SK-N-SH (cell line): ENCODE measurements at regions of chr16 and their contacts with region 1.

Region 1: GRCh38 chr16:55465077-55465896 is 13.7 kb upstream of the MMP2 start:
- DNase-seq: peak; percentile 81
- H3K4me3 ChIP-seq: peak overlapping the region in 1 of 2 experiments; percentile 56; a peak in 1 of 4 replicates
- H3K27ac ChIP-seq: no peak overlapping the region
- H3K4me1 ChIP-seq: peaks cover 0 to 2% of the 10 kb centered on the region in 2 experiments; a peak in 2 of 4 replicates
- H3K27me3 ChIP-seq: no peaks in the 10 kb centered on the region
- CTCF ChIP-seq: peak; percentile 100
- EP300 ChIP-seq: no peak
- RAD21 ChIP-seq: peak; percentile 100

Region 2: DNA sequence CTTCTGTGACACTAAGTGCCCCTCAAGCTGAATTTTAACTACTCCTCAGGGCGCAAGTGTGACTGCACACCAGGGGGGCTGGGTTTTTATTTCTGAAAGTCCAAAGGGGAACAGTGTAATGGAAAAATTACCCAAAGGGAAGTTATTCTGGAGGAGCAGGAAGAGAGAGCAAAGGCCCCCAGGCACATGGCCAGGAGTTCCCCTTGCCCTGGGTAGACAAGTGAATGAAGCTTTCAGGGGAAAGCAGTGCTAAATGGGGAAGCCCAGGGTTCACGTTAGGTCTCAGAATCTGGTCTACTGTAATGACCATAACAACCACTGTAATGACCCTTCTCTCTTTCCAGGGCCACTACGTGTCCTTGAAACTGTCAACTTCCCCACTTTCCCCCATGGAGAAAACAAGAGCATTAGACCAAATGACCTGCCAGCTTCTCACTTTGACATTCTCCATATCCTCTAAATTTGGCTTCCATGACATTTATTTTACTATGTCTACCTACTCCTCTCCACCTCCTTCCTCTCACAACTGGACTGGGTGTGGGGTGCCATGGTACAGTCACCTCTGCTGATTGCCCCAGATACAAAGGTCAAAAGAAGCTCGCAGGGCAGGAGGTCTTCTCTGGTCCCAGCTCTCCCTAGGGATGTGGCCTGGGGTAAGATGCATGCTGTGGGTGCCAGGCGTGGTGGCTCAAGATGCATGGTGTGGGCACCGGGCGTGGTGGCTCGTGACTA is 20.4 kb before region 1 on chr16:
- CTCF ChIA-PET with region 1: interaction called, 32 read pairs
- POLR2A ChIA-PET with region 1: no interaction called
- DNase-seq: no peak
- H3K4me3 ChIP-seq: no peak overlapping the region
- H3K27ac ChIP-seq: no peak overlapping the region
- H3K4me1 ChIP-seq: peaks cover 0 to 6% of the 10 kb centered on the region in 2 experiments; a peak in 1 of 4 replicates
- H3K27me3 ChIP-seq: no peaks in the 10 kb centered on the region
- CTCF ChIP-seq: no peak
- EP300 ChIP-seq: no peak
- RAD21 ChIP-seq: no peak

Region 3: GRCh38 chr16:55494994-55495421 is 29.7 kb after region 1 on chr16:
- CTCF ChIA-PET with region 1: interaction called, 25 read pairs
- POLR2A ChIA-PET with region 1: no interaction called
- DNase-seq: peak; percentile 77
- H3K4me3 ChIP-seq: no peak overlapping the region
- H3K27ac ChIP-seq: peak overlapping the region; percentile 84 to 94
- H3K4me1 ChIP-seq: peaks cover 37 to 48% of the 10 kb centered on the region in 2 experiments
- H3K27me3 ChIP-seq: no peaks in the 10 kb centered on the region
- CTCF ChIP-seq: peak; percentile 56
- EP300 ChIP-seq: peak in 1 of 2 experiments; percentile 27; a peak in 1 of 4 replicates
- RAD21 ChIP-seq: peak; percentile 88

Region 4: DNA sequence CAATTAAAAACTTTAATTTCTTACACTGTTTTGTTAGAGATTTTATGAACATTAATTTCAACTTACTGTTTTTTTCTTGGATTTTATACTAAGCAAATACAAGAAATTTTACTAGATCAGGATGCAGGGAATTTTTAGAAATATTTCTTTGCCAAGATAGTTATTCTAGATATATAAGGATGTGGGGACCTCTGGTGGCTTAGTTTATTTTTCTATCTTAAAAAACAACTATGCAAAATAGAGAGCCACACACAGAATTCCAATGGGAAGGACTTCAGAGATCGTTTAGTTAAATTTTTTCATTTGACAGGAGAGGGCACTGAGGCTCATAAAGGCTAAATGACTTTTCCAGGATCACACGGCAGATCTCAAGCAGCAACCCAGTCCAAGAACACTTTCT is 78.2 kb after region 1 on chr16:
- CTCF ChIA-PET with region 1: interaction called, 130 read pairs
- POLR2A ChIA-PET with region 1: no interaction called
- DNase-seq: peak; percentile 16
- H3K4me3 ChIP-seq: no peak overlapping the region
- H3K27ac ChIP-seq: peak overlapping the region; percentile 55 to 65; a peak in 2 of 4 replicates
- H3K4me1 ChIP-seq: peaks cover 9 to 15% of the 10 kb centered on the region in 2 experiments; a peak in 3 of 4 replicates
- H3K27me3 ChIP-seq: no peaks in the 10 kb centered on the region
- CTCF ChIP-seq: peak; percentile 65
- EP300 ChIP-seq: no peak
- RAD21 ChIP-seq: peak; percentile 74

Region 5: GRCh38 chr16:55661941-55662643 is 196.8 kb after region 1 on chr16:
- CTCF ChIA-PET with region 1: interaction called, 15 read pairs
- POLR2A ChIA-PET with region 1: no interaction called
- DNase-seq: peak; percentile 76
- H3K4me3 ChIP-seq: peak overlapping the region in 1 of 2 experiments; percentile 59; a peak in 1 of 4 replicates
- H3K27ac ChIP-seq: peak overlapping the region in 1 of 2 experiments; percentile 100; a peak in 2 of 4 replicates
- H3K4me1 ChIP-seq: peaks cover 0 to 75% of the 10 kb centered on the region in 2 experiments; a peak in 2 of 4 replicates
- H3K27me3 ChIP-seq: peaks cover 6% of the 10 kb centered on the region; the same call in 1 of the 2 replicates
- CTCF ChIP-seq: no peak
- EP300 ChIP-seq: peak in 1 of 2 experiments; percentile 89; a peak in 2 of 4 replicates
- RAD21 ChIP-seq: peak; percentile 37

Region 6: GRCh38 chr16:55842369-55843104 is 377.2 kb after region 1 on chr16:
- CTCF ChIA-PET with region 1: interaction called, 124 read pairs
- POLR2A ChIA-PET with region 1: no interaction called
- DNase-seq: peak; percentile 70
- H3K4me3 ChIP-seq: no peak overlapping the region; a peak in 1 of 4 replicates
- H3K27ac ChIP-seq: no peak overlapping the region
- H3K4me1 ChIP-seq: no peaks in the 10 kb centered on the region; a peak in 1 of 4 replicates
- H3K27me3 ChIP-seq: no peaks in the 10 kb centered on the region
- CTCF ChIP-seq: peak; percentile 82
- EP300 ChIP-seq: no peak
- RAD21 ChIP-seq: peak; percentile 92

Region 7: GRCh38 chr16:56356276-56357240 is 891.3 kb after region 1 on chr16:
- CTCF ChIA-PET with region 1: interaction called, 14 read pairs
- POLR2A ChIA-PET with region 1: no interaction called
- DNase-seq: peak; percentile 93
- H3K4me3 ChIP-seq: peak overlapping the region in 1 of 2 experiments; percentile 35; a peak in 1 of 4 replicates
- H3K27ac ChIP-seq: peak overlapping the region; percentile 24 to 25; a peak in 2 of 4 replicates
- H3K4me1 ChIP-seq: peaks cover 0 to 8% of the 10 kb centered on the region in 2 experiments; a peak in 2 of 4 replicates
- H3K27me3 ChIP-seq: no peaks in the 10 kb centered on the region
- CTCF ChIP-seq: peak; percentile 78
- EP300 ChIP-seq: no peak
- RAD21 ChIP-seq: peak; percentile 73